ENCODE measurements at regions of chr2 and their contacts with region 1.

Region 1: DNA sequence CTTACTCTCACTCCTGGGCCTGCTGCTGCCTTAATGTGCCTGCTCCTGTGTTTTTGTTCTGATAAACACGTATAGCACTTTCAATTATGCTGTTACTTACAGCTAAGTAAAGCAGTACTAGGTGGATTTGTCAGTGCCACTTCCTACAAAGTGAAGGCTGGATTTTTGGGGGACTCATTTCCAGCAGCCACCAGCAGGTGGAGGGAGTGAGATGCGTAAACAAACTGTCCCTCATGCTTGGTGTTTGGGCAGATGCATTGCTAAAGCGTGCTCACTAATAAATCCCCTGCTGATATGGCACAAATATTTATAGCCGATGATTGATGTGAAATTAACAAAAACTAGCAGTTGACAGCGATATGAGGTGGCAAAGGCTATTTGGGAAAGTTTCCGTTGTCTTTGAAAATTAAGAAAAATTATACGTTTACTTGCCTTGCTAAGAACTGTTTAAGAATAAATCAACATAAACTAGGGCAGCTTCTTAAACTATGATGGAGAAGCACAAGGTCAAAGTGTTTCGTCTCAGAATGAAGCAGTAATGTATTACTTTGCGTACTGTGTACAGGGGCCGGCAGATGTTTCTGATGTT is 101.7 kb downstream of the AGAP1 start:
- DNase-seq: peak; percentile 87
- H3K4me3 ChIP-seq: no peak overlapping the region
- H3K27ac ChIP-seq: no peak overlapping the region
- H3K4me1 ChIP-seq: peaks cover 0 to 31% (median 19%) of the 10 kb centered on the region in 4 donors
- H3K27me3 ChIP-seq: no peaks in the 10 kb centered on the region
- CTCF ChIP-seq: peak; percentile 78 to 88 (median 86)
- EP300 ChIP-seq: no peak
- POLR2A ChIP-seq: no peak

Region 2: DNA sequence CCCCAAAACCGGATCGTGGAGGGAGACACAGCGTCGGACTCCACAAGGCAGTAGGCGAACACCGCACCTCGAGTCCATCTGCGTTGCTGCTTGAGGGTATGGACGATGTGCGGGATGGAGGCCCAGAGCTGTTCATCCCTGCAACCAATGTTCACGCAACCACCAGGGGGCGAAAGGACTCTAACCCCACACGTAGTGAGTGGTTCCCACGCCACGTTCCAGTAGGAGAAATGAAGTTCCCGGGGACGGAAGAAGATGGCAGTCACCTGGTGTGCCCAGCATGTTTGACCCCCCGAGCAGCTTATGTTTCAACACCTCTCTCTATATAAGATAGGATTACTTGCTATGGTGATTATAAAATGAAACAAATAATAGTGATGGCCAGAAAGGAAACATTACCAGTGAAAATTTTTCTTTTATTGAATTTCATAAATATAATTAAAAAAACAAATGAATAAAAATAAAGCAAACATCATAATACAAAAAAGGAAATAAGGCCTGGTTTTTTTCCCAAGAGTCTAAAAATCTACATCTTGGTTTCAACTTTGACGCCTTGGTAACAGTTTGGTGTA is 459.4 kb before region 1 on chr2:
- intact Hi-C with region 1: loop called (anchors 1 kb)
- DNase-seq: peak; percentile 90
- H3K4me3 ChIP-seq: no peak overlapping the region
- H3K27ac ChIP-seq: no peak overlapping the region
- H3K4me1 ChIP-seq: peaks cover 0 to 3% (median 0%) of the 10 kb centered on the region in 4 donors
- H3K27me3 ChIP-seq: no peaks in the 10 kb centered on the region
- CTCF ChIP-seq: peak; percentile 65 to 79 (median 74)
- EP300 ChIP-seq: no peak
- POLR2A ChIP-seq: no peak

Region 3: DNA sequence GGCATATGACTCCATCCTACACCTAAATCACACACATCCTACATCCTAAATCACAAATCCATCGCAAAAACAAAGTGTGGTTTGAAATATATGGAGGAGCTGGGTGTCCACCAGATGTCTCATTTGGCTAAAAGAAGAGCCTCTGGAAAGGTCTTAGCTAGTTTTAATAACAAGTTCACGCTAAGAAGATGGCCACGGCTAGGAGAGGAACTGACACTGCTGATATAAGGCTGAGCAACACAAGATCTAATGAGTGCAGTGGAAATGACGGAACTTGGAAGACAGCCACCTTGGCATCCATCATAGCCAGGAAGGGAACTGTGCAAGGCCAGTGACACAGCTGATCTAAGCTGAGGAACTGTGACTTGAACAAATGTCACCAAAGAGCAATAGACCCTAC is 161.7 kb before region 1 on chr2:
- intact Hi-C with region 1: loop called (anchors 5 kb)
- DNase-seq: no peak
- H3K4me3 ChIP-seq: no peak overlapping the region
- H3K27ac ChIP-seq: peak overlapping the region in 1 of 4 donors; percentile 34
- H3K4me1 ChIP-seq: peaks cover 0 to 11% (median 0%) of the 10 kb centered on the region in 4 donors
- H3K27me3 ChIP-seq: no peaks in the 10 kb centered on the region
- CTCF ChIP-seq: peak in 2 of 4 experiments; percentile 6 to 19
- EP300 ChIP-seq: no peak
- POLR2A ChIP-seq: no peak

Region 4: DNA sequence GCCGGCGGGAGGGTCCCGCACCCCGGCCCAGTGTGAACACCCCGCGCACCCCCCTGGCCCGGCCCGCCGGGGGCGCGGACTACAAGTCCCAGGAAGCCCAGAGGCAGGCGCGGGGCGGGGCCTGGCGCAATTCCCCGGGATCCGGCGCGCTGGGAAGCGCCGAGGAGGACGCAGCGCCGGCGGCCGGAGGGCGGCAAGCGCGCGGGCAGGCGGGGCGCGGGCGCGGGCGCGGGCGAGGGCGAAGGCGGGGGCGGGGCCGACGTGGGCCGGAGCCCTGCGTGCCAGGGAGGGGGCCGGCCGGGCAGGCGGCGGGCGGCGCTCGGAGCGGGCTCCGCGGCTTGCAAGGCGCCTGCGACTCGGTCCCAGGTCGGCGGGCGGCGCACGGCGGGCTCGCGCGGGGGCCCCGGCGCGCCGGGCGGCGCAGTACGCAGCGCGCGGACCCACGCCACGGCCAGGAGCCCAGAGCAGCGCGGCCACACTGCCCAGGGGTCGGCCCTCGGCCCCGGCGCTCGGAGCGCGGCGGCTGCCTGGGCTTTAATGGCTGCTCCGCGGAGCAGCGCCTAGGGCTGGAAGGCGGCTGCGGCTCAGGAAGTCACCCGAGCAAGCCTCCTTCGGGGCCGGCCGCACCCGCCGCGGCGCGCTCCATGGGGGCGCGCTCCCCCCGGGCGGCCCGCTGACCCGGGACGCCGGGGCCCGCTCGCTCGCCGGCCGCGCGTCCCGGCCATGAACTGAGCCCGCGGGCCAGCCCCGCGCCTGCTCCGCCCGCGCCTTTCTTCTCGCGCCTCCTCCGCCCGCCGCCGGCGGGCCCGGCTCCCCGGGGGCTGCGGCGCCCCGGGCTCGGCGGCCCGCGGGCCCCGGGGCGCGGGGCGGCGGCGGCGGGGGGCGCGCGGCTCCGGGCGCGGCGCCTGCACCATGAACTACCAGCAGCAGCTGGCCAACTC is 101.5 kb before region 1 on chr2 and contains the start of gene AGAP1:
- intact Hi-C with region 1: loop called (anchors 5 kb)
- DNase-seq: peak; percentile 94
- H3K4me3 ChIP-seq: peak within 1 kb of the TSS; percentile 51 to 80 (median 68)
- H3K27ac ChIP-seq: peak within 1 kb of the TSS; percentile 80 to 88 (median 87)
- H3K4me1 ChIP-seq: peaks cover 0 to 35% (median 28%) of the 10 kb centered on the region in 4 donors
- H3K27me3 ChIP-seq: no peaks in the 10 kb centered on the region
- CTCF ChIP-seq: no peak
- EP300 ChIP-seq: no peak
- POLR2A ChIP-seq: no peak
- total RNA-seq, gene AGAP1: 18.6 to 42.7 (median 23.8) TPM

Region 5: GRCh38 chr2:235716899-235717442 is 121.5 kb after region 1 on chr2:
- intact Hi-C with region 1: no loop called
- DNase-seq: no peak
- H3K4me3 ChIP-seq: no peak overlapping the region
- H3K27ac ChIP-seq: no peak overlapping the region
- H3K4me1 ChIP-seq: peaks cover 0 to 18% (median 6%) of the 10 kb centered on the region in 4 donors
- H3K27me3 ChIP-seq: no peaks in the 10 kb centered on the region
- CTCF ChIP-seq: no peak
- EP300 ChIP-seq: no peak
- POLR2A ChIP-seq: no peak

Measured in sigmoid colon (tissue), 7 donors.